ENCODE measurements at regions of chr1 and their contacts with region 1.

Region 1: DNA sequence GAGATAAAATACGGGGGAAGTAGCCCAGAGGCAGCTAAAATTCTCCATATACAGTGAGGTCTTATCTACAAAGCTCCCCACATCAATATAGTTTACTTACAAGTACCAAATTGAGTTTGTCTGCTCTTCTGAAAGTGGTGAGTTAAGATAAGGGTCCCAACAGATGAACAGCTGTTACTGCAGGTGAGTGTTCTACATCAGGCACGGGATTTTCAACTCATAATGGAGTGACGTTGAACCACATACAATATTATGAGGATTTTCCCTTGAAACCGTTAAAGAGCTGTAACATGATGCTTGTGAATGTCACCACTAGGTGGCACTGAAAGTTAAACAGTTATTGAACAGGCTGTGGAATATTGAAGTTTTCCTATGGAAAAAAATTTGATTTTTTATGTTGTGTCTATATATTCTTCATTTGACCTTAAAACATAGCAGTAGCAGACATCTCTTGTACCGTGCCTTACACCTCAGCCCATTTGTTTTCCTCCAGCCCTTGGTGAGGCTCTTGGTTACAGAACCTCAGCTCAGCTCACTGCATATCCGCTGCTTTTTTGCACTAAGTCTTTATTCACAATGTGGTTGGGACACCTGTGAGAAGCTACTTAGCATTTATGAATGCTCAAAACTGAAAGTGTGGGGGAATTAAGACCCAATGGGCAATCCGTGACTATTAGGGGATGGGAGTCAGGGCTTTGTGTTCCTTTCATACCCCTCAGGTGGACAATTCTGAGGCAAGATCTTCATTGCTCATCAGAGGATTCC is 23.2 kb downstream of the CD1D start:
- DNase-seq: peak; percentile 48
- H3K4me3 ChIP-seq: no peak overlapping the region
- H3K27ac ChIP-seq: no peak overlapping the region
- H3K4me1 ChIP-seq: no peaks in the 10 kb centered on the region
- H3K27me3 ChIP-seq: no peaks in the 10 kb centered on the region
- CTCF ChIP-seq: peak; percentile 65 to 76

Region 2: DNA sequence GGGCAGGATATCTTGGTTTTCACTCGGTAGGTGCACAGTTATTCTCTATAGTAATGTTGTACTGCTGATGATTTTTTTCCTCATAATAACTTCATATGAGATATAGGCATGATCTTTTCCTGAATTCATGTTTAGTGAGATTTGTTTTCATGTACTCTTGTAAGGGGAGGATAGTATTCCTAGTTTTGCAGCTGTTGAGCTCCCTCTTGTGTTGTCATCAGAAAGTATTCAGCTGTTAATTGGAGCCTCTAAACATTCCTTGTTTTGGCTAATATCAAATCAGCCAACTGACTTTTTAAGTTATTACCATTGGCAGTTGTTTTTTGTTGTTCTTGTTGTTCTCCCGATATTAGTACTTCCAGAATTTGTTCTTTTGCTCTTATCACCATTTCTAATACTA is 292.5 kb after region 1 on chr1:
- CTCF ChIA-PET with region 1: interaction called, 3 read pairs
- dilution Hi-C with region 1: no loop called
- in situ Hi-C with region 1: no loop called
- intact Hi-C with region 1: loop called (anchors 1 kb)
- DNase-seq: peak; percentile 2
- H3K4me3 ChIP-seq: no peak overlapping the region
- H3K27ac ChIP-seq: no peak overlapping the region
- H3K4me1 ChIP-seq: no peaks in the 10 kb centered on the region
- H3K27me3 ChIP-seq: peaks cover 5% of the 10 kb centered on the region
- CTCF ChIP-seq: peak; percentile 21 to 37

Region 3: DNA sequence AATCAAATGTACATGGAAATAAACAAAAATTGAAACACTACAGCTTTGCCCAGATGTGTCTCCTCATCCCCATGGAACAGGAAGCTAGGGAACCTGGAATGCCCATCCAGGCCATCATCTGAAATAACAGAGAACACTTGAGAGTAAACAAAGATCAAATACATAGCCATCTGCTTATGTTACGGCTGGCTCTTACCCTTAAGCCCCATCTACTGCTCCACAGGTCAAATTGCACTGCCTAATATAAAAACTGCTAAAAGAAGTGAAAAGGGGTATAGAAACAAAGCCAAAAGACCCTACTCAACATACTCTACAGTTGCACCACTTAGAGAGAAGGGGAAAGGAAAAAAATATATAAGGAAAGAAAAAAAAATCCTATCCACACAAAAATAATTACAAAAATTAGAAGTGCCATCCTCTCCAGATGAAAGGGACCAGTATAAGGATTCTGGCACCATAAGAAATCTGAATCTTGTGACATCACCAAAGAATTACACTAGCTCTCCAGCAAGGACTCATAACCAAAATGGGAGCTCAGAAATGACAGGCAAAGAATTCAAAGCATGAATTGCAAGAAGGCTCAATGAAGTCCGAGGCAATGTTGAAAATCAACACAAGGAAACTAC is 323.4 kb after region 1 on chr1:
- CTCF ChIA-PET with region 1: interaction called, 3 read pairs
- dilution Hi-C with region 1: no loop called
- in situ Hi-C with region 1: no loop called
- intact Hi-C with region 1: loop called (anchors 10 kb)
- DNase-seq: peak; percentile 2
- H3K4me3 ChIP-seq: no peak overlapping the region
- H3K27ac ChIP-seq: no peak overlapping the region
- H3K4me1 ChIP-seq: no peaks in the 10 kb centered on the region
- H3K27me3 ChIP-seq: peaks cover 2% of the 10 kb centered on the region
- CTCF ChIP-seq: no peak